ENCODE measurements at regions of chr19 and their contacts with region 1.

Region 1: DNA sequence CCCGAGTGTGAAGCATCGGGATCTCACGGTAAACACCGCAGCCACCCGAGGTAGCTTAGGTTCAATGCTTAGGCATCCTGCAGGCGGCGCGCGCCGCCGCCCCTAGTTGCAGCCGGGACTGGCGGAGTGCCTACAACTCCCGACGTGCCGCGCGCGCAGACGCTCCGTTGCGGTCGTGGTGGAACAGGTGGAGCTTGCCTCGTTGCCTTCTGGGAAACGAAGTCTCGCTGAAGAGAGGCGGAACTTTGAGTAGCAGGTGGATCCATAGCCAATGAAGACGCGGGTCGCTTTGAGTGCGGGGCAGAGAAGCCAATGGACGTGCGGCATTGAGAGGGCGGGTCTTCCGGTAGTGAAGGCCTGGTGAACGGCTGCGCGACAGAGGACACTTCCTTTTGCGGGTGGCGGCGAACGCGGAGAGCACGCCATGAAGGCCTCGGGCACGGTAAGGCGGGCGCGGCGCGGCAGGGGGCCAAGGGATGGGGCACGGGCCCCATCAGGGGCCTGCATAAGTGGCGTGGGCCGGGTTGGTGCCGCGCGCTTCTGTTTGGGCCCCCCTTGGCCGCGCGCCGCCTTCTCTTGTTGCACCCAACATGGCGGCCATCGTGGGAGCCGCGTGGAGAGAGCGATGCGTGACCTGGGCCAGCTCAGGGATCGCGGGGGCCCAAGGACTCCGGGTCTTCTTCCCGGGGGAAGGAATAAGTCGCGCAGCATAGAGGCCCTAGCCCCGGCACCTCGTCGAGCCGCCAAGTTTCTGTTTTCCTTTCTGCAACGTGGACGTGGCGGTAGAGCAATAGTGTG is at the start of gene RPL18A:
- DNase-seq: peak; percentile 100
- H3K4me3 Mint-ChIP-seq: peak within 1 kb of the TSS; percentile 92
- H3K27ac Mint-ChIP-seq: peak within 1 kb of the TSS; percentile 96
- H3K4me1 Mint-ChIP-seq: peaks cover 37% of the 10 kb centered on the region
- H3K27me3 Mint-ChIP-seq: no peaks in the 10 kb centered on the region
- total RNA-seq, gene RPL18A: 4,021 to 4,160 TPM

Region 2: DNA sequence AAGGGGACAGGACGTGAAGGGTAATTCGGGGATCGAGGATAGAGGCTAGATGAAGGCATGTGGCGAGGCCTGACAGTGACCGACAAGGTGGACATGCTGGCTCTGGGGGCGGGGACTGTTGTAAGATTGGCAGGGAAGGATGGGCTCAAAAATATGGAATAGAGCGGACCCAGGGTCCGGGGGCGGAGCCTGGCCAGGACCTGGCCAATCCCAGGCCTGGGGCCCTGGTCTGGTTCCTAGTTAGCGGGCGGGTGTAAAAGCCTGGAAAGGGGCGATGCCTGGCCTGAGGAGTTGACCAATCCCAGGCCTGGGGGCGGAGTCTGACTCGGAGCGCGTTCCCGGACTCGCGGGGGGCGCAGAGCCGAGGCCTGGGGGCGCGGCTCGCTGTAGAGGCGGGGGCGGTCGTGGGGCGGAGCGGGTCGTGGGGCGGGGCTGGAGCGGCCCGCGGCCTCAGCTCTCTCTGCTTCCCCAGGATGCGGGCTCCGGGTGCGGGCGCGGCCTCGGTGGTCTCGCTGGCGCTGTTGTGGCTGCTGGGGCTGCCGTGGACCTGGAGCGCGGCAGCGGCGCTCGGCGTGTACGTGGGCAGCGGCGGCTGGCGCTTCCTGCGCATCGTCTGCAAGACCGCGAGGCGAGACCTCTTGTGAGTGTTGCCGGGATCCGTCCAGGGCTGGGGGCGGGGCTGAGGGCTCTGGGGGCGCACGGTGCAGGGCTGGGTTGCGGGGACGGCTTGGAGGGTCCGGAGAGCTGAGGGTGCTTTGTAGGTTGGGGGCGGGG is 389.5 kb before region 1 on chr19 and contains the start of gene SLC27A1:
- CTCF ChIA-PET with region 1: no interaction called
- intact Hi-C with region 1: loop called (anchors 5 kb)
- DNase-seq: peak; percentile 90
- H3K4me3 Mint-ChIP-seq: peak within 1 kb of the TSS; percentile 84
- H3K27ac Mint-ChIP-seq: peak within 1 kb of the TSS; percentile 10
- H3K4me1 Mint-ChIP-seq: peaks cover 26% of the 10 kb centered on the region
- H3K27me3 Mint-ChIP-seq: no peaks in the 10 kb centered on the region
- total RNA-seq, gene SLC27A1: 1.2 to 1.7 TPM

Region 3: GRCh38 chr19:17605761-17606745 is 253.7 kb before region 1 on chr19:
- CTCF ChIA-PET with region 1: interaction called, 5 read pairs
- intact Hi-C with region 1: loop called (anchors 5 kb)
- DNase-seq: peak; percentile 79
- H3K4me3 Mint-ChIP-seq: peak overlapping the region; percentile 69
- H3K27ac Mint-ChIP-seq: peak overlapping the region; percentile 56
- H3K4me1 Mint-ChIP-seq: peaks cover 4% of the 10 kb centered on the region
- H3K27me3 Mint-ChIP-seq: peaks cover 25% of the 10 kb centered on the region

Region 4: DNA sequence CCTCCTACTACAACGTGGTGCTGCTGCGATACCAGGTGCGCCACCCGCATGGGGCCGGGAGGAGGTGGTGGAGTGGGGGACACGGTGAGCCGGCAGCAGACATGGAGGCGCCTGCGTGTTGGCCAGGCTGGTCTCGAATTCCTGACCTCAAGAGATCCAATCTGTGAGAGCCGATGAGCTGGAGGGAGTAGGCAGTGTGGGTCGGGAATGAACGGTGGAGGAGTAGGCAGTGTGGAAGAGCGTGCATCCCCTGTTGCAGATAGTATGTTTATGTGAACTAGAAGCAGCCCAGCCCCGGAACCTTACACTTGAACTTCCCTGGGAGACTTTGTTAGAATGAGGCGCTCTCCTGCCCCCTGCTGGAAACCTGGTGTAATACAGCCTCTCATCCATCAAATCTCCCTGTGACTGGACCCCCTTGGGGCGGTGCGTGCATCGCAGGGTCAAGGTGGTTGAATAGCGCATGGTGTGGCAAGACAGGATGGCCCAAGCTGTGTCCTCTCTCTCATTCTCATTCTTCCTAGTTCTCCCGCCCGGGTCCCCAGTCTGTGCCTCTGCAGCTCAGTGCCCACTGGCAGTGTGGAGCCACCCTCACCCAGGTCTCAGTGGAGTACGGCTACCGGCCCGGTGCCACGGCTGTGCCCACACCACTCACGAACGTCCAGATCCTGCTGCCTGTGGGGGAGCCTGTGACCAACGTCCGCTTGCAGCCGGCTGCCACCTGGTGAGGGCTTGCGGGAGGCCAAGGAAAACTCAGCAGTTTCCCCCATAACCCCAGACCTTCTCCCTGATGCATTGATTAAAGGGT is 75.3 kb before region 1 on chr19:
- CTCF ChIA-PET with region 1: interaction called, 6 read pairs
- intact Hi-C with region 1: loop called (anchors 1 kb)
- DNase-seq: peak; percentile 88
- H3K4me3 Mint-ChIP-seq: no peak overlapping the region
- H3K27ac Mint-ChIP-seq: no peak overlapping the region
- H3K4me1 Mint-ChIP-seq: peaks cover 12% of the 10 kb centered on the region
- H3K27me3 Mint-ChIP-seq: no peaks in the 10 kb centered on the region

Region 5: GRCh38 chr19:17847538-17848366 is 12.0 kb before region 1 on chr19 and contains the start of gene JAK3:
- CTCF ChIA-PET with region 1: interaction called, 42 read pairs
- intact Hi-C with region 1: loop called (anchors 1 kb)
- DNase-seq: peak; percentile 97
- H3K4me3 Mint-ChIP-seq: peak within 1 kb of the TSS; percentile 94
- H3K27ac Mint-ChIP-seq: peak within 1 kb of the TSS; percentile 94
- H3K4me1 Mint-ChIP-seq: peaks cover 70% of the 10 kb centered on the region
- H3K27me3 Mint-ChIP-seq: no peaks in the 10 kb centered on the region
- total RNA-seq, gene JAK3: 231 to 235 TPM

Region 6: DNA sequence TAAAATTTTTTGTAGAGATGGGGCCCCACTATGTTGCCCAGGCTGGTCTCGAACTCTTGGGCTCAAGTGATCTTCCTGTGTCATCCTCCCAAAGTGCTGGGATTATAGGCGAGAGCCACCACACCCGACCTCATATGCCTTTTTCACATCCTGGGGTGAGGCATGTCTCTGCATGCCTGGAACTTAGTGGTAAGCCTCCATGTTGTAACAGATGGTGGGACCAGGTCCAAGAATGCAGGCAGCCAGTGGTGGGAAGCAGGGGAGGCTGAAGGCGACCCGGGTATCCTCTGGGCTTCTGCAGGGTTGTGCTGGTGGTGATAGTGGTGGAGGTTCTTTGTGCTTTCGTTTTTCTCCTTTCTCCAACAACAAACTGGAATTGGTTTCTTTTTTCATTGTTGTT is 43.0 kb after region 1 on chr19:
- CTCF ChIA-PET with region 1: no interaction called
- intact Hi-C with region 1: no loop called
- DNase-seq: no peak
- H3K4me3 Mint-ChIP-seq: no peak overlapping the region
- H3K27ac Mint-ChIP-seq: no peak overlapping the region
- H3K4me1 Mint-ChIP-seq: no peaks in the 10 kb centered on the region
- H3K27me3 Mint-ChIP-seq: peaks cover 2% of the 10 kb centered on the region

Region 7: DNA sequence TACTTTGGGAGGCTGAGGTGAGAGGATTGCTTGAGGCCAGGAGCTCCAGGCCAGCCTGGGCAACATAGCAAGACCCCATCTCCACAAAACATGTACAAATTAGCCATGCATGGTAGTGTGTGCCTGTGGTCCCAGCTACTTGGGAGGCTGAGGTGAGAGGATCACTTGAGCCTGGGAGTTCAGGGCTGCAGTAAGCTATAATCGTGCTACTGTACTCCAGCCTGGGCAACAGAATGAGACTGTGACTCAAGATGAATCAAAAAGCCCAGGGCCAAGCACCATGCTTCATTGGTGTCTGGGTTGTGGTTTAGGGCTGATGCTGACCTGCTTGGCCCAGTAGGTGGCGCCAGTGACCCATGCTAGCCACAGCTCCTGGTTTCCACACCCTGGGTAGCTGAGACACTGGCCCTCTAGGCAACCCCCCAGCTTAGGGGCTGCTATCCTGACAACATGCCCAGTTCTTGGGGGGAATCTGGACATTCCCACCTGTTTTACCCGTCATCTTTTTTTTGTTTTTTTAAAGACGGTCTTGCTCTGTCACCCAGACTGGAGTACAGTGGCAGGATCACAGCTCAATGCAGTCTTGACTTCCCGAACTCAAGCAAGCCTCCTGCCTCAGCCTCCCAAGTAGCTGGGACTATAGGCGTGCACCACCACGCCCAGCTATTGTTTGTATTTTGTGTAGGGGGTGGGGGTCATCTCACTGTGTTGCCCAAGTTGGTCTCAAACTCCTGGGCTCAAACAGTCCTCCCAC is 78.5 kb after region 1 on chr19:
- CTCF ChIA-PET with region 1: interaction called, 70 read pairs
- intact Hi-C with region 1: no loop called
- DNase-seq: peak; percentile 92
- H3K4me3 Mint-ChIP-seq: no peak overlapping the region
- H3K27ac Mint-ChIP-seq: no peak overlapping the region
- H3K4me1 Mint-ChIP-seq: peaks cover 15% of the 10 kb centered on the region
- H3K27me3 Mint-ChIP-seq: no peaks in the 10 kb centered on the region

Region 8: GRCh38 chr19:18109733-18110595 is 250.2 kb after region 1 on chr19:
- CTCF ChIA-PET with region 1: no interaction called
- intact Hi-C with region 1: no loop called
- DNase-seq: peak; percentile 49
- H3K4me3 Mint-ChIP-seq: peak overlapping the region; percentile 71
- H3K27ac Mint-ChIP-seq: no peak overlapping the region
- H3K4me1 Mint-ChIP-seq: peaks cover 15% of the 10 kb centered on the region
- H3K27me3 Mint-ChIP-seq: no peaks in the 10 kb centered on the region

Measured in activated naive CD4-positive, alpha-beta T cell treated with anti-CD3 and anti-CD28 coated beads for 36 hours (primary cell).